ENCODE measurements at regions of chr11 and their contacts with region 1.

Region 1: DNA sequence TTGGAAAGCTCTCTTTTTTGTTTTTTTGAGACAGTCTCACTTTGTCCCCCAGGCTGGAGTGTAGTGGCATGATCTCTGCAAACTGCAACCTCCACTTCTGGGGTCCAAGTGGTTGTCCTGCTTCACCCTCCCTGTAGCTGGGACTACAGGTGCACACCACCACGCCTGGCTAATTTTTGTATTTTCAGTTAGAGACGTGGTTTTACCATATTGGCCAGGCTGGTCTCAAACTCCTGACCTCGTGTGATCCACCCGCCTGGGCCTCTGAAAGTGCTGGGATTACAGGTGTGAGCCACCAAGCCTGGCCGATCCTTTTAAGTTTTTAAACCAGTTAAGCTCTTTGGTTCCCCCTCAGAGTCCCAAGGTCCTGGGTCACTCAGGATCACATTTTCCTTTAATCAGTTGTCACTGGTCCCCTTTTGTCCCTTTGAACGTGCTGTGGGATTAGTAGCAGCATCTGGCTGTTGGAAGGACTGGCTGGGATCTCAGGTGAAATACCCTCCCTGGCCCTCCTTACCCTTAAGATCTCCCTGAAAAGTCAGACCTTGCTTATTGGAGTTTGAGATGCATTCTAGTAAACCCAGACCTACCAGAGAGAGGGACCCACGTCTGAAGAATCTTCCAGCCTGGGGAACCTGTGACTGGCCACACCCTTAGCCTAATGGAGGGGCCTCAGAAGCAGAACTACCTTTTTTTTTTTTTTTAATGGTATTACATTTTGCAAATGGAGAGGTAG is 8.1 kb downstream of the MALAT1 start:
- DNase-seq: peak in 2 of 3 donors; percentile 25 to 55
- ATAC-seq: peak; percentile 28 to 44
- H3K4me3 ChIP-seq: no peak overlapping the region
- H3K27ac ChIP-seq: peak overlapping the region; percentile 99
- H3K4me1 ChIP-seq: no peaks in the 10 kb centered on the region
- H3K27me3 ChIP-seq: no peaks in the 10 kb centered on the region

Region 2: GRCh38 chr11:65382033-65382807 is 124.7 kb before region 1 on chr11 and contains the start of gene SLC25A45:
- intact Hi-C with region 1: loop called in 2 of 4 experiments (anchors 2 to 10 kb)
- DNase-seq: peak; percentile 95 to 97 (median 96)
- ATAC-seq: peak; percentile 93 to 94
- H3K4me3 ChIP-seq: peak within 1 kb of the TSS; percentile 15
- H3K27ac ChIP-seq: peak within 1 kb of the TSS; percentile 97
- H3K4me1 ChIP-seq: peaks cover 6% of the 10 kb centered on the region
- H3K27me3 ChIP-seq: no peaks in the 10 kb centered on the region
- total RNA-seq, gene SLC25A45: 6.1 to 7.7 (median 7.4) TPM

Region 3: DNA sequence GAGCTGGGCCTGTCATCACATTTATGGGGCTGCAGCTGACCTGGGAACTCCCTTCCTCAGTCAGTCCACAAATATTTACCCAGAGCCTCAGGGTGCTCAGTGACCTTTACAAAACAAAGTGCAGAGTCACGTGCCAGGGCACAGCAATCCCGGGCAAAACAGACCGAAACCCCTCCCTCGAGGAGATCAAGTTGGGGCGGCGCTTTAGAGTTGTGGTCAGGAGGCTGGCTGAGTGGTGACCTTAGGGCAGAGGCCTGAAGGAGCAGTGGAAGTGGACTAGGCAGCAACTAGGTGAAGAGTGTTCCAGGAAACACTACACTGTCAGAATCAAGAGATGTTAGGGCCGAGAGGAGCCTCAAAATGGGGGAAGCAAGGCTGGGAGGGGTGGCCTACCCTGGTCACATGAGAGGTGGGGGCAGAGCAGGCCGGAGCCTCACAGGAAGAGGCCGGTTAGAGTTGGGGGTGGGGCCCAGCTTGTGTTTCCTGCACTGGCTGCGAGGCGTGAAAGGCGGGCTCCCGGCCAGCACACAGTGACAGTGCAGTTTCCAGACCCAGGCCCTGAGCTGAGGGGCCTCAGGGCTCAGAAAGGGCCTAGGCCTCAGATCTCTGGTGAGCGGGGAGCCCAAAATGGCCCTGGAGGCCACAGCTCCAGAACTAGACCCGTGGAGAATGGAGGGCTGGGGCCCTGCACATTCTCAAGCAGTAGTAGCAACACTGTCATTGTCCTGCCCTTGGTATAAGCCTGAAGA is 88.1 kb before region 1 on chr11:
- intact Hi-C with region 1: loop called in 2 of 4 experiments (anchors 5 kb)
- DNase-seq: peak; percentile 99 to 100 (median 99)
- ATAC-seq: peak; percentile 63
- H3K4me3 ChIP-seq: peak overlapping the region; percentile 43
- H3K27ac ChIP-seq: peak overlapping the region; percentile 95
- H3K4me1 ChIP-seq: peaks cover 14% of the 10 kb centered on the region
- H3K27me3 ChIP-seq: no peaks in the 10 kb centered on the region

Region 4: DNA sequence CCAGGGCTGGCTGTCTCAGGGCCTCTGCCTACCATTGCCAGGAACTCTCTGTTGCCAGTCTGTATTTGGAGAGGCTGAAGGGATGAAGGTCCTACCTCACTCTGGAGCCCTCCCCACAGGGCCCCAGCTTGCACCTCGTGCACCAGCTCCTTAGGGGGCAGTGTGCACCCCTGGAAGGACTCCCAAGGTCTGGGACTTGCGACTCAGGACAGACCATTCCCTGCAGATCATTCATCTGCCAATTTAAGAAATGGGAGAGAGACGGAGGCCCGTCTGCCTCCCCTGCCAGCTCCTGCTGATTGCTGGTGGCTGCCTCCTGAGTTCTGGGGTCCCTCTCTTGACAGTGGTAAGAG is 35.6 kb before region 1 on chr11:
- intact Hi-C with region 1: loop called in 2 of 4 experiments (anchors 5 kb)
- DNase-seq: peak; percentile 77 to 89 (median 86)
- ATAC-seq: peak; percentile 85 to 88
- H3K4me3 ChIP-seq: no peak overlapping the region
- H3K27ac ChIP-seq: peak overlapping the region; percentile 100
- H3K4me1 ChIP-seq: peaks cover 11% of the 10 kb centered on the region
- H3K27me3 ChIP-seq: no peaks in the 10 kb centered on the region

Region 5: DNA sequence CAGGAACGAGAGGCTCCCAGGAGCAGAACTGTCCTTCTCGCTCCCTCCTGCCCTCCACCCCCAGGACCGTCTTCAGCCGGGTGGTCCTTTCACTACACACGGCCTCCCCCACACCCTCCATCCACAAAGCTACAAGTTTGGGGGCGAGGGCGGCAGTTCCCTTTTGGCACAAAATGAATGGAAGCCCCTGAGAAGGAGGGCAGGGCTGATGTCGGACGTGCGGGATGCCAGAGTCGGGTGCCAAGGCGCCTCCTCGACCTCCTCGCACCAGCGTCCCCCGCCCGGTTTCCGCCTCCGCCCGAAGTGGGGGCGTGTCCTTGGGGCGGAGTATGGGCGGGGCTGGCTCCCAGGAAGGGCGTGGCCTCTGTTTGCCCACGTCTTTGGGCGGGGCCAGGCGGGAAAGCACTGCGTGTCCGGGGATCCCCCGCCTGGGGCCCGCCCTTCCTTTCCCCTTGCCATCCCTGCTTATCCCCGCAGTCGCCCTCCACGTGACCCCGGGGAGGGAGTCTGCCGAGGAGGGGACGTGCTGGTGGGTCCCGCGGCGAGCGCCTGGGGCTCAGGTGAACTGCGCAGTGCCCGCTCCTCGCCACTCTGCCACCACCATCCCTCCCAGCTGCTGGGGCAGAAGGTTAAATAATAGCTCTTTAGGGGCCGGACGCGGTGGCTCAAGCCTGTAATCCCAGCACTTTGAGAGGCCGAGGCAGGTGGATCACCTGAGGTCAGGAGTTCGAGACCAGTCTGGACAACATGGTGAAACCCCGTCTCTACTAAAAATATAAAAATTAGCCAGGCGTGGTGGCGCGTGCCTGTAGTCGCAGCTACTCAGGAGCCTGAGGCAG is 366.6 kb after region 1 on chr11:
- intact Hi-C with region 1: no loop called
- DNase-seq: peak; percentile 96 to 99 (median 98)
- ATAC-seq: peak; percentile 93 to 94
- H3K4me3 ChIP-seq: peak overlapping the region; percentile 79
- H3K27ac ChIP-seq: peak overlapping the region; percentile 79
- H3K4me1 ChIP-seq: peaks cover 5% of the 10 kb centered on the region
- H3K27me3 ChIP-seq: no peaks in the 10 kb centered on the region

Measured in right cardiac atrium (tissue), 5 donors.